Activated T-helper 1 cell treated with anti-CD3 and anti-CD28 coated beads, Interleukin-12 subunit alpha, Interleukin-12 subunit beta, Interleukin-2, Interleukin-4 antibody, amounts not matched to agents 30 ng/mL and 10 ng/mL and 1 ng/mL, durations not matched to agents 14 hours and 24 hours and 36 hours (primary cell): ENCODE measurements at regions of chrX and their contacts with region 1.

Region 1: DNA sequence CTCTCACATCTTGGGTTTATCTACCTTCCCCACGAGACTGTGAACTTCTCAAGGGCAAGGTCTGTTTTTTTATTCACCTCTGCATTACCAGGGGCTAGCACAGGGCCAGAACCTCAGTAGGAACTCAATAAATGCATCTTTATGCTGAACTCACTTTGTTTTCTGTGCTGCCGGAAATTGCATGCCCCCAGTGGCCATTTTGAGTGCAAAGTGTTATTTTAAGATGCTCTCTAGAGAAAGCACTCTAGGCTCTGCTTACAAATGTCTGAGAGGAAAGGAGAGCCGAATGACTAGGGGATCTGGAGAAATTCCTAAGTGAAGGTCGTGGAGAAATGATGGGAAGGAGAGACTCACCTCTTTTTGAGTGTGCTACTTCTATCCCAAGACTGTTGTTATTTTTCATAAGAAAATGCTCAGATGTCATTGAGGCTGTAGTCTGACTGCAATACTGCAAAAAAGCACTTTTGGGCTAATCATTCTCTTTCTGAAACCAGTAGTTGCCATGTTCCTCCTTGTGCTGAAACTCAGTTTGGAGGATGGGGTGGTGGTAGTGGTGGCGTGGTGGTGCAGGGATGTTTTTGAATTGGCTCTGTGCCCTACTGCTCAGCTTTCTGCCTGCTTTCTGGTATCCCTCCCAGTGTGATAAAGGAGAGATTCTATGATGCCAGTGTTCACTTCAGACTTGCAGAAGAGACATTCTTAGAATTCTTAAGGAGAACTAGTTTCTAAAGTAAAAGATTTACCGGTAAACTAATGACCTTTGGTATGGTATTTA is 41.3 kb downstream of the DOCK11 start:
- DNase-seq: peak; percentile 9
- H3K4me3 Mint-ChIP-seq: peak overlapping the region; percentile 72
- H3K27ac Mint-ChIP-seq: peak overlapping the region; percentile 94
- H3K4me1 Mint-ChIP-seq: peaks cover 55% of the 10 kb centered on the region
- H3K27me3 Mint-ChIP-seq: no peaks in the 10 kb centered on the region

Region 2: GRCh38 chrX:118370921-118371624 is 165.8 kb before region 1 on chrX:
- intact Hi-C with region 1: no loop called
- DNase-seq: no peak
- H3K4me3 Mint-ChIP-seq: no peak overlapping the region
- H3K27ac Mint-ChIP-seq: no peak overlapping the region
- H3K4me1 Mint-ChIP-seq: no peaks in the 10 kb centered on the region
- H3K27me3 Mint-ChIP-seq: no peaks in the 10 kb centered on the region

Region 3: DNA sequence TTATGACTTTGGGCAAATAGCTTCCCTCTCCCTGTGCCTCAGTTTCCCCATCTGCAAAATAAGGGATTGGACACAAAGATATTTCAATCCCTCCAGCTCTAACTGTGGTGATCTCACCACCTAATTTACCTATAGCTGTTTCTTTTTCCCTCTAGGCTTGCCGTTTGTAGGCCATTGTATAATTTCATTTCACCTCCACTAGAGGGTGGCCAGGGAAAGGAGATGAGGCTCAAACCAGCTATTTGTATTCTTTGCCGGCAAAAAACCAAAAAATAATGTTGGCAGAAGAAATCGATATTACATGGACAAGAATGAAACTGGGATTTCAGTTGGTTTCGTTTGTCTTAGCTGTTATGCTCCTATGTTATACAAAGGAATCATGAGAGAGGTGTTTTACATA is 77.4 kb before region 1 on chrX:
- intact Hi-C with region 1: loop called (anchors 1 kb)
- DNase-seq: no peak
- H3K4me3 Mint-ChIP-seq: no peak overlapping the region
- H3K27ac Mint-ChIP-seq: no peak overlapping the region
- H3K4me1 Mint-ChIP-seq: no peaks in the 10 kb centered on the region
- H3K27me3 Mint-ChIP-seq: peaks cover 5% of the 10 kb centered on the region

Region 4: GRCh38 chrX:118495061-118495921 is 41.6 kb before region 1 on chrX and contains the start of gene DOCK11:
- intact Hi-C with region 1: loop called (anchors 1 kb)
- DNase-seq: peak; percentile 75
- H3K4me3 Mint-ChIP-seq: peak within 1 kb of the TSS; percentile 98
- H3K27ac Mint-ChIP-seq: peak within 1 kb of the TSS; percentile 97
- H3K4me1 Mint-ChIP-seq: peaks cover 30% of the 10 kb centered on the region
- H3K27me3 Mint-ChIP-seq: no peaks in the 10 kb centered on the region
- total RNA-seq, gene DOCK11: 28.6 and 30.1 TPM in 2 replicates

Region 5: GRCh38 chrX:118571829-118572228 is 35.0 kb after region 1 on chrX:
- intact Hi-C with region 1: loop called (anchors 1 kb)
- DNase-seq: no peak
- H3K4me3 Mint-ChIP-seq: no peak overlapping the region
- H3K27ac Mint-ChIP-seq: no peak overlapping the region
- H3K4me1 Mint-ChIP-seq: peaks cover 13% of the 10 kb centered on the region
- H3K27me3 Mint-ChIP-seq: no peaks in the 10 kb centered on the region

Region 6: GRCh38 chrX:118603981-118604380 is 67.1 kb after region 1 on chrX:
- intact Hi-C with region 1: loop called (anchors 5 kb)
- DNase-seq: peak; percentile 0
- H3K4me3 Mint-ChIP-seq: no peak overlapping the region
- H3K27ac Mint-ChIP-seq: no peak overlapping the region
- H3K4me1 Mint-ChIP-seq: peaks cover 10% of the 10 kb centered on the region
- H3K27me3 Mint-ChIP-seq: no peaks in the 10 kb centered on the region